ENCODE measurements at regions of chr16 and their contacts with region 1.

Region 1: GRCh38 chr16:21158208-21159110 is at the start of gene LDAF1:
- DNase-seq: peak; percentile 62
- H3K4me3 ChIP-seq: peak within 1 kb of the TSS; percentile 58 to 83 (median 64)
- H3K27ac ChIP-seq: no peak within 1 kb of the TSS
- H3K4me1 ChIP-seq: peaks cover 13% of the 10 kb centered on the region
- H3K27me3 ChIP-seq: no peaks in the 10 kb centered on the region
- CTCF ChIP-seq: no peak
- POLR2A ChIP-seq: no peak
- total RNA-seq, gene LDAF1: 19.4 and 20.4 TPM in 2 replicates

Region 2: GRCh38 chr16:20900299-20901067 is 258.0 kb before region 1 on chr16 and contains the starts of genes DCUN1D3 and LYRM1:
- CTCF ChIA-PET with region 1: interaction called, 3 read pairs
- POLR2A ChIA-PET with region 1: interaction called, 5 read pairs
- dilution Hi-C with region 1: no loop called
- intact Hi-C with region 1: loop called (anchors 5 kb)
- DNase-seq: peak; percentile 99
- H3K4me3 ChIP-seq: peak within 1 kb of the TSS; percentile 56 to 96 (median 83)
- H3K27ac ChIP-seq: peak within 1 kb of the TSS; percentile 100
- H3K4me1 ChIP-seq: peaks cover 58% of the 10 kb centered on the region
- H3K27me3 ChIP-seq: no peaks in the 10 kb centered on the region
- CTCF ChIP-seq: no peak
- POLR2A ChIP-seq: peak; percentile 78
- total RNA-seq, gene DCUN1D3: 35.0 and 39.6 TPM in 2 replicates
- total RNA-seq, gene LYRM1: 28.4 and 29.1 TPM in 2 replicates

Region 3: DNA sequence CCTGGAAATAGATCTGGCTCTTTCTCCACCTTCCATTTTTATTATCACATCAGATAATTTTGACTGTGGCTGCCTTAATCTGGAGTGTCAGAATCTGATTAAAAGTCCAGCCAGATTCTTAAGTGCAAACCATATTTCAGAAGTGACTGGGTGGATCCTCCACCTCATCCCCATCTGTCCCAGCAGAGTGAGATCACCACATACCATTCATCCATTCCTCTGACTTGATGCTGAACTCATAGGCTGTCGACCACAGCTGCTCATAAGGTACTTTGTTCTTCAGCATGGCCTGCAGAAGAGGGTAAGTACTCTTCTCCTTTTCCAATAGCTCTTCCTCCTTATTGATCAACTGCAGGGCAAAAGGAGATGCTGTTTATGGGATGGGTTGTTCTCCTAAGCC is 61.3 kb before region 1 on chr16:
- CTCF ChIA-PET with region 1: no interaction called
- POLR2A ChIA-PET with region 1: no interaction called
- dilution Hi-C with region 1: no loop called
- intact Hi-C with region 1: no loop called
- DNase-seq: no peak
- H3K4me3 ChIP-seq: no peak overlapping the region
- H3K27ac ChIP-seq: no peak overlapping the region
- H3K4me1 ChIP-seq: peaks cover 4% of the 10 kb centered on the region
- H3K27me3 ChIP-seq: peaks cover 6 to 7% of the 10 kb centered on the region in 2 experiments
- CTCF ChIP-seq: no peak
- POLR2A ChIP-seq: no peak

Region 4: DNA sequence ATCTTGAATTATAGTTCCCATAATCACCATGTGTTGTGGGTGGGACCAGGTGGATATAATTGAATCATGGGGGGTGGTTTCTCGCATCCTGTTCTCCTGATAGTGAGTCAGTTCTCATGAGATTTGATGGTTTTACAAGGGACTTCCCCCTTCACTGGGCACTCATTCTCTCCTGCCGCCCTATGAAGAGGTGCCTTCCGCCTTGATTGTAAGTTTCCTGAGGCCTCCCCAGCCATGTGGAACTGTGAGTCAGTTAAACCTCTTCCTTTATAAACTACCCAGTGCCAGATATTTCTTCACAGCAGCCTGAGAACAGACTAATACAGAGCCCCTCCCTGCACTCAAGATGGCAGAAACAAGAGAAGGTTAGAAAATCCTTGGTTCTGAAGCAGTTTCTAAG is 26.4 kb after region 1 on chr16:
- CTCF ChIA-PET with region 1: interaction called, 30 read pairs
- POLR2A ChIA-PET with region 1: no interaction called
- dilution Hi-C with region 1: no loop called
- intact Hi-C with region 1: loop called (anchors 1 kb)
- DNase-seq: no peak
- H3K4me3 ChIP-seq: no peak overlapping the region
- H3K27ac ChIP-seq: no peak overlapping the region
- H3K4me1 ChIP-seq: peaks cover 11% of the 10 kb centered on the region
- H3K27me3 ChIP-seq: no peaks in the 10 kb centered on the region
- CTCF ChIP-seq: no peak
- POLR2A ChIP-seq: no peak

Region 5: GRCh38 chr16:21554795-21555585 is 396.5 kb after region 1 on chr16:
- CTCF ChIA-PET with region 1: interaction called, 18 read pairs
- POLR2A ChIA-PET with region 1: no interaction called
- dilution Hi-C with region 1: no loop called
- intact Hi-C with region 1: loop called (anchors 2 kb)
- DNase-seq: peak; percentile 66
- H3K4me3 ChIP-seq: no peak overlapping the region
- H3K27ac ChIP-seq: no peak overlapping the region
- H3K4me1 ChIP-seq: no peaks in the 10 kb centered on the region
- H3K27me3 ChIP-seq: peaks cover 0 to 3% of the 10 kb centered on the region in 2 experiments
- CTCF ChIP-seq: peak; percentile 96 to 100
- POLR2A ChIP-seq: no peak